Heart right ventricle (tissue), 16 donors: ENCODE measurements at regions of chr2 and their contacts with region 1.

Region 1: DNA sequence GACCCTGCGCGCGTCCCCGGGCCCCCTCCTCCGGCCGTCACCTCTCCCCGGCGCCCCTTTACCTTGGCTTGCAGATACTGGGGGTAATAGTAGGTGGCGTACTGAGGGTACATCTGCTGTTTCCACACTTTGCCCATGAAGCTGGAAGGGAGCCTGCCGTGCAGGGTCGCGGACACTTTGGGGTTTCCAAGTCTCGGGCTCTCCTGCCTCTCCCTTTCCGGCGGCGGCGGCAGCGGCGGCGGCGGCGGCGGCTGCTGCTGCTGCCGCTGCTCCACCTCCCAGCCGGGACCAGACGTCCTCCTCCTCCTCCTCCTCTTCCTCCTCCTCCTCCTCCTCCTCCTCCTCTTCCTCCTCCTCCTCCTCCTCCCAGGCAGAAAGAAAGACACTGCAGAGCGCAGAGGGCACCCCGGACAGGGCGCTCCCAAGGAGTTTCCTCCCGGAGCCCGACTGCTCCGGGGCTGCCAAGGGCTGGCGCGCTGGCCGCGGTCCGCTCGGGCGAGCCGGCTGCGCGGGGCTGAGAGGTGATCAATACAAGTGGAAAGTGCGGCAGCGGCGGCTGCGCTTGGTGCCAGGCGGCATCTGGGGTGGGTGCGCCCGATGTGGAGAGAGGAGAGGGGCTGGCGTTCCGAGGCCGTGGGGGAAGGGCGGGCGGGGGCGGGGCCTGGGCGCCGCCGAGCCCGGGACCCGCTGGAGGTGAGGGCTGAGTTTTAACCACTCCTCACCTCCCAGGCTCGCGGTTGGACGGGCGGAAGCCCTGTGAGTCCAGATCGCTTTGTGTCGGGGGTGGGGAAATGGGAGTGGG is at the start of gene RBMS1:
- DNase-seq: peak; percentile 70 to 73
- ATAC-seq: peak; percentile 59 to 87 (median 77)
- H3K4me3 ChIP-seq: peak within 1 kb of the TSS; percentile 73 to 92 (median 88)
- H3K27ac ChIP-seq: peak within 1 kb of the TSS; percentile 95 to 99 (median 97)
- H3K4me1 ChIP-seq: peaks cover 0 to 40% (median 27%) of the 10 kb centered on the region in 9 donors
- H3K27me3 ChIP-seq: peaks cover 0 to 9% (median 0%) of the 10 kb centered on the region in 7 donors
- CTCF ChIP-seq: no peak
- total RNA-seq, gene RBMS1: 54.1 to 77.7 (median 60.2) TPM

Region 2: DNA sequence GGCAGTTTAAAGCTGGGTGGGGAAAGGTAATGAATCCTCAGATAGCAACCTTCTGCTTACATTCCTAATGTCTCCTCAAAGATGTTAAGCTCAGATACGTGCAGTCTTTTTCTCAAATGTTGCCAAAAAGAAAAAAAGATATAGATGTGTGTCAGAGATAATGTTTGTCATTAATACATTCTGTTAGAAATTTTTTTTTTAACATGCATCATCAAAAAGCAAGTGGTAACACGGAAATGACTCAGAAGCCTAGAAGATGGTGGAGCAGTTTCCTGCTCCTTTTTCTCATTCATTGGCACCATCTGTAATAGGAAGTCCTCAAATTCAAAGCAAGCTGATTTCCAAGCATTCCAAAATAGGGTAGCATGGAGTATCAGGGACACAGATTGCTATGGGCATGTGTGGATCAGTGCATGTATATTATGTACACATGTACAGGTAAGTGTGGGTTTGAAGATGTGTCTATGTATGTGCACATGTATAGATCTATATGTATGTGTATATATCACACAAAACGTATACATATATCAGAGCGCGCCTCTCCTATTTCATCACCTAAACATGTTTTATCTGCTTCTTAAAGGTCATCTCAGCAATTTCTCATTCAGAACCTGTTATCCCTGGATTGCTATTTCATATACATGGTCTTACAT is 213.5 kb before region 1 on chr2:
- intact Hi-C with region 1: loop called in 2 of 10 experiments (anchors 5 to 10 kb)
- DNase-seq: no peak
- ATAC-seq: peak in 2 of 8 donors; percentile 16 to 53
- H3K4me3 ChIP-seq: no peak overlapping the region
- H3K27ac ChIP-seq: peak overlapping the region in 4 of 10 donors; percentile 14 to 51 (median 24)
- H3K4me1 ChIP-seq: peaks cover 0 to 59% (median 23%) of the 10 kb centered on the region in 9 donors
- H3K27me3 ChIP-seq: no peaks in the 10 kb centered on the region
- CTCF ChIP-seq: no peak

Region 3: GRCh38 chr2:160332318-160332717 is 161.1 kb before region 1 on chr2:
- intact Hi-C with region 1: loop called in 6 of 10 experiments (anchors 5 to 10 kb)
- DNase-seq: peak in 1 of 2 donors; percentile 37
- ATAC-seq: peak in 7 of 8 donors; percentile 39 to 81 (median 45)
- H3K4me3 ChIP-seq: no peak overlapping the region
- H3K27ac ChIP-seq: peak overlapping the region in 3 of 10 donors; percentile 56 to 82 (median 67)
- H3K4me1 ChIP-seq: peaks cover 5 to 100% (median 95%) of the 10 kb centered on the region in 9 donors
- H3K27me3 ChIP-seq: no peaks in the 10 kb centered on the region
- CTCF ChIP-seq: peak in 5 of 9 donors; percentile 10 to 41 (median 25)

Region 4: GRCh38 chr2:160429248-160430000 is 64.0 kb before region 1 on chr2:
- intact Hi-C with region 1: loop called in 6 of 10 experiments (anchors 5 to 10 kb)
- DNase-seq: no peak
- ATAC-seq: peak in 2 of 8 donors; percentile 35 to 53
- H3K4me3 ChIP-seq: no peak overlapping the region
- H3K27ac ChIP-seq: peak overlapping the region in 8 of 10 donors; percentile 59 to 79 (median 68)
- H3K4me1 ChIP-seq: peaks cover 10 to 82% (median 69%) of the 10 kb centered on the region in 9 donors
- H3K27me3 ChIP-seq: no peaks in the 10 kb centered on the region
- CTCF ChIP-seq: peak; percentile 45 to 74 (median 64)

Region 5: DNA sequence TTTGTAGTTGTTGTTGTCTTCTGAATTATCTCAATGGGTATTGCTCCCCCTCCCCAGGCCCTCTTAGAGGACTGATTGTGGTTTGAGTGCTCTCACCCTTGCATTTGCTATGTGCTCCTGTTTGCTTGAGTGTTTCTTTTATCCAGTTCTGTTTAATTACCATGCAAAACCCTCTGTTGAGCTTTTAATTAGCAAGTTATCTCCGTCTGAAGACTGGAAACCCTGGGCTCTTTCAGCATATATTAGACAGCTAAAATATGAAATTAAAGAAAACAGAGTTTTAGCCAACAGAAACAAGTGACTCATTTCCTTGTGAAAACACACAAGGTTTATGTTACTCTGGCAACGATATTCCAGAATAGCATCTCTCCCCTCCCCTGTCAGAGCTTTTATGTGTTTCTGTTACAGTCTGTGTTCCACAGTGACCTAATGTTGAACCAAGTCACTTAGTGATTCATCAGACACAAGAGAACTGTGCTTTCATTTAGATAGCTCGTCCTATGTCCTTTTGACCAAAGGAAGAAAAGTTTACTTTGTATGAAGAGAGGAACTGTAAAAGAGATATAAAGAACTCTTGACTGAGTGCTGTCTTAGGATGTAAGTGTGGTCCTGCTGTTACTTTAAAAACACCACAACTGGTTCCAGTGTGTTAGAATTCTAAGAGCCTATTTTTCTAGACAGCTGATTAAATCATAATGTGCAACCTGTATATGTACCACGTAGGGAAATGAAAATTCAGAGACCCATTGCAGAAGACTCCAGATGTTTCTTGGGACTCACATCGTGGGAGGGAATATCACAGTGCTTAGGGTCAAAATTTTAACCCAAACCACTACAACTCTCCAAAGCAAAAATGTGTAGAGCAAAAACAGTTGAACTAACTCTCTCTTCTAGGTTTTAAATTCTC is 173.0 kb after region 1 on chr2:
- intact Hi-C with region 1: loop called in 1 of 10 experiments (anchors 10 kb)
- DNase-seq: peak in 1 of 2 donors; percentile 42
- ATAC-seq: peak; percentile 93 to 100 (median 96)
- H3K4me3 ChIP-seq: peak overlapping the region in 3 of 10 donors; percentile 6 to 29 (median 19)
- H3K27ac ChIP-seq: peak overlapping the region; percentile 18 to 75 (median 64)
- H3K4me1 ChIP-seq: peaks cover 5 to 35% (median 18%) of the 10 kb centered on the region in 9 donors
- H3K27me3 ChIP-seq: no peaks in the 10 kb centered on the region
- CTCF ChIP-seq: no peak

Region 6: GRCh38 chr2:160970052-160970965 is 476.9 kb after region 1 on chr2:
- intact Hi-C with region 1: loop called in 3 of 10 experiments (anchors 5 to 10 kb)
- DNase-seq: peak in 1 of 2 donors; percentile 57
- ATAC-seq: peak; percentile 32 to 81 (median 74)
- H3K4me3 ChIP-seq: peak overlapping the region in 7 of 10 donors; percentile 9 to 40 (median 32)
- H3K27ac ChIP-seq: peak overlapping the region in 9 of 10 donors; percentile 14 to 75 (median 68)
- H3K4me1 ChIP-seq: peaks cover 0 to 24% (median 13%) of the 10 kb centered on the region in 9 donors
- H3K27me3 ChIP-seq: no peaks in the 10 kb centered on the region
- CTCF ChIP-seq: peak; percentile 49 to 86 (median 80)

Region 7: GRCh38 chr2:161445097-161445496 is 951.7 kb after region 1 on chr2:
- intact Hi-C with region 1: no loop called
- DNase-seq: no peak
- ATAC-seq: no peak
- H3K4me3 ChIP-seq: no peak overlapping the region
- H3K27ac ChIP-seq: no peak overlapping the region
- H3K4me1 ChIP-seq: no peaks in the 10 kb centered on the region
- H3K27me3 ChIP-seq: peaks cover 0 to 61% (median 46%) of the 10 kb centered on the region in 7 donors
- CTCF ChIP-seq: no peak